PC-3 (cell line): ENCODE measurements at regions of chr17 and their contacts with region 1.

Region 1: DNA sequence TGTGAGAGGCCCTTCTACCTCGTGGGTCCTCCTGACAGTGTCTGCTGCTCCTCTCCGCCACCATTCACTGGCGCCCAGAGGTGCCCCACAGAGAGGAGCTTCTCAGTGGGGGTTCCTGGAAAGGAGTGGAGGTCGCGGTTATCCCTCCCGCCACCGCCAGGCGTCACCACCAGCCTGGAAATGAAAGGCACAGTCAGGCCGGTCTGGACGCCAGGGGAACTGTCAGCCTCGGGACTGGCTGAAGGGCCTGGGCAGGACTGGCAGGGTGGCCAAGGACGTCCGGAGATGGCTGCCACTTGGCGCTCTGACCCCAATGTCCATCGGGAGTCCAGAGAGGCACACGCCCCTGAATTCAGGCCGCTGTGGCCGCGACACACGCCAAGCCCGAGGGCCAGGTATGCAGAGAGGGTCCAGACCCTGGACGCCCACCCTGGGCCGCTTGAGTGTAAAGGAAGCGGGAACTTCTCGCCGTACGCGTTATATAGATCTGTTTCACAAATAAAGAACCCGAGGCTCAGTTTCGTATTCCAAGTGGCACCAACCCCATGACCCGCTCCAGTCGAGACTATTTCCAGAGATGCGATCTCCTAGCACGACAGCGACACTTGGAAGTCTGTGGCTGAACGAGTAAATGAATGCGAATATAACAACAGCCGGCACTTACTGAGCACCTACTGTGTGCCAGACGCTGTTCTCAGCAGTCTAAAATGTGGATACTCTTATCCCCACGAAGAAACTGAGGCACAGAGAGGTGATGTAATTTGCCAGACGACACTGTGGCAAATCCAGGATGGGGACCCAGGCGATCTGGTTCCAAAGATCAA is 7.6 kb upstream of the NXPH3 start:
- DNase-seq: peak; percentile 93
- ATAC-seq: peak; percentile 69
- H3K4me3 ChIP-seq: peak overlapping the region; percentile 72
- H3K27ac ChIP-seq: no peak overlapping the region
- H3K4me1 ChIP-seq: peaks cover 20% of the 10 kb centered on the region
- H3K27me3 ChIP-seq: no peaks in the 10 kb centered on the region
- CTCF ChIP-seq: peak; percentile 96

Region 2: GRCh38 chr17:49523706-49524472 is 44.2 kb before region 1 on chr17:
- CTCF ChIA-PET with region 1: no interaction called
- POLR2A ChIA-PET with region 1: no interaction called
- intact Hi-C with region 1: no loop called
- DNase-seq: peak; percentile 50
- ATAC-seq: peak; percentile 48
- H3K4me3 ChIP-seq: no peak overlapping the region
- H3K27ac ChIP-seq: no peak overlapping the region
- H3K4me1 ChIP-seq: peaks cover 6% of the 10 kb centered on the region
- H3K27me3 ChIP-seq: peaks cover 4% of the 10 kb centered on the region; the same call in 1 of the 2 replicates
- CTCF ChIP-seq: no peak

Region 3: DNA sequence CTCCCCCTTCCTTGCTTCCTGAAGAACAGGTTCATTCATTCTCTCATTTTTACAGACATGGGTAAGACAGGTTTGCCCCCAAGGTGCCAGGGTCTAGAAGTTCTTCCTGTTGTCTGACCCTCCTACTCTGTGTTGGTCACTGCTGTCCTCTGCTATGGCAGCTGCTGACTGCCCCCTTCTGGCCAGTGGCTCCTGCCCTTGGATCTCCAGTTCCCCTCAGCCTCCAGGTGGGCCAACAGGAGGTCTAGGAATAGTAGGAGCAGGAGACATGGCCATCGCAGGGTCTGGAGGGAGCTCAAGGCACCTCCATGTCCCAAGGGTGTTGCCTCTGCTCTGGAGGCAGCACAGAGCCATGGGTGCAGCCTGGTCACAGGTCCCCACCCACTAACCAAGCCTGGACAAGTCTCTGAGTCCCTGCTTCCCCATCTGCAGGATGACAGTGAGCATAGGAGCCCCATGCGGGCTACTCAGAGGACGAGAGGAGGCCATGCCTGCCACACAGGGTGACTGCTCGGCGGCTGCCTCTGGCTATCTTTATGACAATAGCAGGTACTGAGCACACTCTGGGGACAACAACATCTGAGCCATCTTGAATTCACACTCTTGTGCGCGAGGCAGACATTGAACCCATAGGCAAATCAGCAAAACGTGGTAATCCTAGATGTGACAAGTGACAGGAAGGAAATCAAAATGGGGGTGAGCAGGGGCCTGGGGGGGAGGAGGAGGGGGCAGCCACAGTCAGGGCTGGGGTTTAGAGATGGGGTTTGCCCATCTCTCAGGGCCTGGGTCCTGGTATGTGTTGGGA is 19.4 kb before region 1 on chr17:
- CTCF ChIA-PET with region 1: no interaction called
- POLR2A ChIA-PET with region 1: no interaction called
- intact Hi-C with region 1: no loop called
- DNase-seq: peak; percentile 62
- ATAC-seq: peak; percentile 52
- H3K4me3 ChIP-seq: no peak overlapping the region
- H3K27ac ChIP-seq: no peak overlapping the region
- H3K4me1 ChIP-seq: no peaks in the 10 kb centered on the region
- H3K27me3 ChIP-seq: no peaks in the 10 kb centered on the region
- CTCF ChIP-seq: peak; percentile 91

Region 4: DNA sequence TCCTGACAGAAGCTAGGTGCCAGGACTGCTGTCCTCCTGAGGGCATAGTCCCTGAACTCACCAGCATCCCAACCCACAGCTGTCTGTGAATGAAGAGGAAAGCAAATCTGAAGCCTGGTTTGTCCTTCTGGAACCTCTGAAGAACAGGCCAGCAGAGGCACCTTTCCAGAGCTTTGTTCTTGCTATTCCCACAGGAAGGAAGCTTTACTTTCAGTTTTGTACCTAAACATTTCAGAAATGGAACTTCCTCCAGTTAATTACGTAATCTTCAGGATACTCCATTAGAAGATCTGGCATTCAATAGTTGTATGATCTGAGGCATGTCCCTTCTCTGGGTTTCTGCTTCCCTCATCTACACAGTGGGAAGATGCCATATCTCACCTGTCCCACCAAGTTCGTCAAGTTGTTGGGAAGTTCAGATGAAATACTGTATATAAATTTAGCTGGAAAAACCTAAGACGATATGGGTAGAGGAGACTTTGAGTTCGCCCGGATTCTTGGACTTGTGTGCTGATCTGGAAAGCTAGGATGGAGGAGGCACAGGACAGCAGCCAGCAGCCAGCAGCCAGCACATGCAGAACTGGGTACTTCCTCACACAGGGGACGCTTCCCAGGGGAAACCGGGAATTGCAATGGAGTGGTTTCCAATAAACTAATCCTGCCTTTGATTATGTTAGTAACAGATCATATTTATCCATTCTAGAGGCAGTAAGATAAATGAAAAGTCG is 30.0 kb after region 1 on chr17:
- CTCF ChIA-PET with region 1: interaction called, 12 read pairs
- POLR2A ChIA-PET with region 1: no interaction called
- intact Hi-C with region 1: no loop called
- DNase-seq: no peak
- ATAC-seq: no peak
- H3K4me3 ChIP-seq: no peak overlapping the region
- H3K27ac ChIP-seq: no peak overlapping the region
- H3K4me1 ChIP-seq: no peaks in the 10 kb centered on the region
- H3K27me3 ChIP-seq: no peaks in the 10 kb centered on the region
- CTCF ChIP-seq: no peak

Region 5: GRCh38 chr17:49616601-49617131 is 48.6 kb after region 1 on chr17:
- CTCF ChIA-PET with region 1: interaction called, 11 read pairs
- POLR2A ChIA-PET with region 1: no interaction called
- intact Hi-C with region 1: no loop called
- DNase-seq: no peak
- ATAC-seq: no peak
- H3K4me3 ChIP-seq: no peak overlapping the region
- H3K27ac ChIP-seq: no peak overlapping the region
- H3K4me1 ChIP-seq: no peaks in the 10 kb centered on the region
- H3K27me3 ChIP-seq: no peaks in the 10 kb centered on the region
- CTCF ChIP-seq: no peak

Region 6: GRCh38 chr17:49694847-49695683 is 127.0 kb after region 1 on chr17:
- CTCF ChIA-PET with region 1: interaction called, 13 read pairs
- POLR2A ChIA-PET with region 1: no interaction called
- intact Hi-C with region 1: loop called (anchors 1 kb)
- DNase-seq: peak; percentile 66
- ATAC-seq: peak; percentile 31
- H3K4me3 ChIP-seq: peak overlapping the region; percentile 47
- H3K27ac ChIP-seq: no peak overlapping the region
- H3K4me1 ChIP-seq: no peaks in the 10 kb centered on the region
- H3K27me3 ChIP-seq: no peaks in the 10 kb centered on the region
- CTCF ChIP-seq: peak; percentile 99

Region 7: GRCh38 chr17:49779739-49780231 is 211.7 kb after region 1 on chr17:
- CTCF ChIA-PET with region 1: no interaction called
- POLR2A ChIA-PET with region 1: no interaction called
- intact Hi-C with region 1: loop called (anchors 1 kb)
- DNase-seq: peak; percentile 83
- ATAC-seq: peak; percentile 95
- H3K4me3 ChIP-seq: no peak overlapping the region
- H3K27ac ChIP-seq: peak overlapping the region; percentile 13
- H3K4me1 ChIP-seq: peaks cover 13% of the 10 kb centered on the region
- H3K27me3 ChIP-seq: no peaks in the 10 kb centered on the region
- CTCF ChIP-seq: peak; percentile 91

Region 8: GRCh38 chr17:49861150-49861892 is 293.2 kb after region 1 on chr17:
- CTCF ChIA-PET with region 1: no interaction called
- POLR2A ChIA-PET with region 1: no interaction called
- intact Hi-C with region 1: loop called (anchors 5 kb)
- DNase-seq: peak; percentile 70
- ATAC-seq: peak; percentile 60
- H3K4me3 ChIP-seq: peak overlapping the region; percentile 18; the same call in 1 of the 2 replicates
- H3K27ac ChIP-seq: no peak overlapping the region
- H3K4me1 ChIP-seq: peaks cover 4% of the 10 kb centered on the region; the same call in 1 of the 2 replicates
- H3K27me3 ChIP-seq: no peaks in the 10 kb centered on the region
- CTCF ChIP-seq: peak; percentile 100